ENCODE measurements at regions of chr3 and their contacts with region 1.

Region 1: DNA sequence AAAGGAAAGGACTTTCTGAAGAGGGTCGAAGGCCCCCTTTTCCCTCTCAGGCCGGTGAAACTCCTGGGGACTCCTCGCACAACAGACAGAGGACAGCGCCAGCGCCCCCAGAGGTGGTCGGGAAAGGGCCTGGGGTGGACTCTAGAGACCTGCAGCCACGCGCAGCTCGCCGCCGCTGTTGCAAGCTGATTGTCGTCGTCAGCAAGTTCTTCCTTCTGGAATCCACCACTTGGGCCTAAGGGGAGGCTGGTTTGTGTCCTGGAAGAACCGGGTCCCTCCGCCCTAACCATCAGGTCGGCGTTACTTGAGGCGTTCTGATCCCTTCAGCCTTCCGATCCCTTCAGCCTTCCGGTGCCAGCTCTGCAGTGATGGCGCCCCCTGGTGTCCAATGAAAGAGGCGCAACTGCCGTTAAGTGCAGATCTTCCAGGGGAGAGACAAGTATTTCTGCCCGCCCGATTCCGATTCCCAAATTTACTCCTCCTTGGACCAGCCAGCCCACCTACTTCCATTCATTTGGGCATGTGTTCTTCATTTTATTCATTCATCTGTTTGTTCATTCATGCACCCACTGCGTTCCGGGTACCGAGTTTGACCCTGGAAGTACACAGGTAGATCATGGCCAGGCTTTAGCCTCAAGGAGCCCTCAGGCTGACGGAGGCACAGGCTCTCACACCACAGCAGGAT is 77.2 kb upstream of the SLC6A11 start:
- DNase-seq: peak; percentile 30
- ATAC-seq: peak; percentile 93
- H3K4me3 ChIP-seq: peak overlapping the region; percentile 24 to 40; a peak in 3 of 4 replicates
- H3K27ac ChIP-seq: no peak overlapping the region
- H3K4me1 ChIP-seq: no peaks in the 10 kb centered on the region
- H3K27me3 ChIP-seq: peaks cover 8% of the 10 kb centered on the region
- CTCF ChIP-seq: peak; percentile 90

Region 2: GRCh38 chr3:10349801-10350200 is 389.0 kb before region 1 on chr3:
- CTCF ChIA-PET with region 1: interaction called, 3 read pairs
- POLR2A ChIA-PET with region 1: no interaction called
- in situ Hi-C with region 1: no loop called
- intact Hi-C with region 1: loop called (anchors 5 kb)
- DNase-seq: no peak
- ATAC-seq: no peak
- H3K4me3 ChIP-seq: no peak overlapping the region
- H3K27ac ChIP-seq: no peak overlapping the region
- H3K4me1 ChIP-seq: no peaks in the 10 kb centered on the region; the same call in 1 of the 2 replicates
- H3K27me3 ChIP-seq: no peaks in the 10 kb centered on the region
- CTCF ChIP-seq: no peak

Region 3: GRCh38 chr3:10417849-10418248 is 321.0 kb before region 1 on chr3:
- CTCF ChIA-PET with region 1: interaction called, 7 read pairs
- POLR2A ChIA-PET with region 1: no interaction called
- in situ Hi-C with region 1: no loop called
- intact Hi-C with region 1: loop called (anchors 5 kb)
- DNase-seq: peak; percentile 20
- ATAC-seq: peak; percentile 74
- H3K4me3 ChIP-seq: no peak overlapping the region
- H3K27ac ChIP-seq: no peak overlapping the region
- H3K4me1 ChIP-seq: no peaks in the 10 kb centered on the region
- H3K27me3 ChIP-seq: peaks cover 2% of the 10 kb centered on the region
- CTCF ChIP-seq: peak; percentile 60

Region 4: GRCh38 chr3:10758304-10759061 is 19.7 kb after region 1 on chr3:
- CTCF ChIA-PET with region 1: no interaction called
- POLR2A ChIA-PET with region 1: no interaction called
- in situ Hi-C with region 1: no loop called
- intact Hi-C with region 1: no loop called
- DNase-seq: peak; percentile 38
- ATAC-seq: peak; percentile 94
- H3K4me3 ChIP-seq: no peak overlapping the region
- H3K27ac ChIP-seq: no peak overlapping the region
- H3K4me1 ChIP-seq: no peaks in the 10 kb centered on the region
- H3K27me3 ChIP-seq: peaks cover 3% of the 10 kb centered on the region; the same call in 1 of the 2 replicates
- CTCF ChIP-seq: peak; percentile 68